ENCODE measurements at regions of chr19 and their contacts with region 1.

Region 1: GRCh38 chr19:33998739-33999345 is 173.5 kb upstream of the LSM14A start:
- DNase-seq: no peak
- H3K4me3 ChIP-seq: no peak overlapping the region
- H3K27ac ChIP-seq: no peak overlapping the region
- H3K4me1 ChIP-seq: no peaks in the 10 kb centered on the region
- H3K27me3 ChIP-seq: peaks cover 0 to 6% of the 10 kb centered on the region in 2 donors
- CTCF ChIP-seq: peak; percentile 13 to 31

Region 2: GRCh38 chr19:33795370-33796163 is 203.3 kb before region 1 on chr19:
- intact Hi-C with region 1: loop called (anchors 5 kb)
- DNase-seq: peak; percentile 67 to 87
- H3K4me3 ChIP-seq: peak overlapping the region; percentile 83 to 91
- H3K27ac ChIP-seq: peak overlapping the region; percentile 84 to 97
- H3K4me1 ChIP-seq: peaks cover 0 to 26% (median 8%) of the 10 kb centered on the region in 4 donors
- H3K27me3 ChIP-seq: peaks cover 0 to 4% of the 10 kb centered on the region in 2 donors
- CTCF ChIP-seq: peak; percentile 73 to 85

Measured in tibial artery (tissue), 4 donors.